Activated T-helper 2 cell treated with anti-CD3 and anti-CD28 coated beads, Interferon-gamma antibody, Interleukin-2, Interleukin-4, amounts not matched to agents 10 μg/mL and 5 μg/mL and 100 μg/mL, durations not matched to agents 14 hours and 24 hours and 36 hours (primary cell): ENCODE measurements at regions of chr2 and their contacts with region 1.

Region 1: GRCh38 chr2:29923110-29923721 is 1.8 kb upstream of the ALK start:
- DNase-seq: no peak
- H3K4me3 Mint-ChIP-seq: no peak overlapping the region
- H3K27ac Mint-ChIP-seq: no peak overlapping the region
- H3K4me1 Mint-ChIP-seq: no peaks in the 10 kb centered on the region
- H3K27me3 Mint-ChIP-seq: peaks cover 40% of the 10 kb centered on the region

Region 2: DNA sequence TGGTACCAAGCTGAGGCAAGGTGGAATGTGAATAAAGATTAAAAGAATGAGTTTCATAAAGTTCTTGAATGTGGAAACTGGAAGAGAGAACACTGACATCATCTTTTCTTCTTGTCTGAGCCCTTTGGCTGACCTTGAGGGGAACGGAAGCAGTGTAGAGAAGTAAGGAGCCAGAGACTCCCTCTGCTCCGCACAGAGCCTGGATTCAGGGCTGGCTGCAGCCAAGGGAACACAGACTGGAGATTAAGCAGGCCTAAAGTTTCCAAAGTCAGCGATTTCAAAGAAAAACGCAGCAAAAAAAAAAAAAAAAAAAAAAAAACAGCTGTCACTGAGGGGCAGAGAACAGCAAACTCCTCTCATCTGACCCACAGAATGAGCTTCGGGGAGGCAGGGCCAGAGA is 17.5 kb after region 1 on chr2:
- intact Hi-C with region 1: no loop called
- DNase-seq: no peak
- H3K4me3 Mint-ChIP-seq: no peak overlapping the region
- H3K27ac Mint-ChIP-seq: no peak overlapping the region
- H3K4me1 Mint-ChIP-seq: no peaks in the 10 kb centered on the region
- H3K27me3 Mint-ChIP-seq: peaks cover 1% of the 10 kb centered on the region

Region 3: GRCh38 chr2:29987146-29987545 is 63.9 kb after region 1 on chr2:
- intact Hi-C with region 1: no loop called
- DNase-seq: no peak
- H3K4me3 Mint-ChIP-seq: no peak overlapping the region
- H3K27ac Mint-ChIP-seq: no peak overlapping the region
- H3K4me1 Mint-ChIP-seq: no peaks in the 10 kb centered on the region
- H3K27me3 Mint-ChIP-seq: no peaks in the 10 kb centered on the region

Region 4: DNA sequence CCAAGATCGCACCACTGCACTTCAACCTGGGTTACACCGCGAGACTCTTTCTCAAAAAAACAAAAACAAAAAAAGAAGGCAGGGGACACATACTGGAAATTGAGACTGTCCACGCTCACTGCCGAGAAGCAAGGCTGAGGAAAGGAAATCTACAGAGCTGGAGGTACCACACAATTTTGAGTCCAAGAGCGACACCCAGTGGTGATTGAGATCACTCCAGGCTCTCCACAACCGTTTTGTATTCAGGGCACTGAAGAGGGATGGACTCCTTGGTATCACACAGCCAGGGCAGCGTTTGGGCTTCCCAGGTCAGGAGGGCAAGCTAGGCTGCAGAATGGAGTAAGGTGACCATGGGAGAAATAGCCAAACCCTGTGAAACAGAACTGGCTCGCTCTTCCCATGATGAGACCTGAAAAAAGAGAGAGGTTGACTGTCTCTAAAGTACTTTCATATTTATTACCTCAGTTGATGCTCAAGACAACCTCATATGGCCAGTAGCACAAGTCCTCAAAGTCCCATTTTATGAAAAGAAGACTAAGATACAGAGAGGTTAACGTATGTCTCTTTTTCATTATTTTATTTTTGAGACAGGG is 149.1 kb after region 1 on chr2:
- intact Hi-C with region 1: loop called (anchors 1 kb)
- DNase-seq: peak; percentile 38
- H3K4me3 Mint-ChIP-seq: no peak overlapping the region
- H3K27ac Mint-ChIP-seq: no peak overlapping the region
- H3K4me1 Mint-ChIP-seq: no peaks in the 10 kb centered on the region
- H3K27me3 Mint-ChIP-seq: peaks cover 18% of the 10 kb centered on the region

Region 5: GRCh38 chr2:30127016-30127893 is 204.0 kb after region 1 on chr2:
- intact Hi-C with region 1: no loop called
- DNase-seq: no peak
- H3K4me3 Mint-ChIP-seq: no peak overlapping the region
- H3K27ac Mint-ChIP-seq: no peak overlapping the region
- H3K4me1 Mint-ChIP-seq: no peaks in the 10 kb centered on the region
- H3K27me3 Mint-ChIP-seq: peaks cover 27% of the 10 kb centered on the region